Cardiac septum (tissue), 1 donor: ENCODE measurements at regions of chr2 and their contacts with region 1.

Region 1: DNA sequence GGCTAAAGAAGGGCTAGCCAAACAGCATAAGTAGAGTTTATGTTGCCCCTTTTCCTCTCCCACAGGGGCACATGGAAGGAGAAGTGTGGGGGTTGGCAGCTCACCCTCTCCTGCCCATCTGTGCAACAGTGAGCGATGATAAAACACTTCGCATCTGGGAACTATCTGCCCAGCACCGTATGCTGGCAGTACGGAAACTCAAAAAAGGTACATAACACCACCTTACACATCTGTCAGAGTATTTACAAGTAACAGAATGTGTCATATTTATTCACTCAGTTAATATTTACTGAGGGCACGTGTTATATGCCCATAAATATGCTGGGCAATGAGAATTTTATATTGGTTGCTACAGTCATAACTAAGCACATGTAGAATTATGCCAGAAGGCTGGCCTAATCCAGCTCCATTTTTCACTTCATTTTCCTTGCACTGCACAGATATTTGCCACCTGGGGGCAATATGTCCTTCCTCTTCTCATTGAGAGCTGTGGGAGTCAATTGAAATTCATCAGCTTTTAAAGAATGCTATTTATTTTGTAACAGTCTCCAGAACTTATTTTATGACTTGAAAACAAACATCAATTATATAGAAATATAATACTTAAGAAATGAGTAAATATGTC is 150.6 kb downstream of the RTN4 start:
- DNase-seq: no peak

Region 2: DNA sequence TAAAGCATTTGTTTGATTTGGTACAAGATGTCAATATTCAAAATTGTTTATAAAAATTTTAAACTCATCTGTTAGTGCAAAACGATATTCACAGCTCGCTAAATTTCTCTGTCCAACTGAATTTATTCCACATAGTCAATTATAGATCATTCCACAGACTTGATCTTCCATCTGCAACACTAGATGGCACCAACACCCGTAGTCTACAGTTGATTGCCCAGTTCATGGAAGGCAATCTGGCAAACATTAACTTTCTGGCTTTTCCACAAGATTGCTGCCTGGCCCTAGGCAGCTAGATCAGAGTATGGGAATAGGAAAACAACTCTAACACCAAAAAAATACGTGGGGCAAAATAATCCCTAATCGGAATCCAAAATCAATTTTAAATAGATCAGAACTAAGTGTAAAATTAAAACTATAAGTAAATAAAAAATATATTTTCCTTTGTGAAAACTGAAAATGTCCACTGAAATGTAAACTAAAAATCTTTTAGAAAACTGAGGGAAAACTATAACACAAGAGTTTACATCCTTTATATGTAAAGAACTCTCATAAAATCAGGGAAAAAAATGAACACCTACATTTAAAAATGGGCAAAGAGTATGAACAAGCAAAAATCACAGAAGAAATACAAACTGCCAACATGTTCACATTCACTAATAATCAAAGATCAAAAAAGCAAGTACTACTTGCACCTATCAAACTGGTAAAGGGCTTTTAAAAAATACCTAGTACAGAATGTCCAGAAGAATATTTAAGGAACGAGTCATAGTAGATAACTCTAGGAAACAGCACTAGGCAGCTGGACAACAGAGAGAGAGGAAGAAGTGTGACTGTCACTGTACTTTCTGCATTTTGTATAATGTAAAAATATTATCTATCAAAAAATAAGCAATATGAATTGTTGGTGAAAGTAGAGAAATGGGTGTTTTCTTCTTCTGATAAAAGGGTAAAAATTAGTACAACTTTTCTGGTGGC is 115.6 kb after region 1 on chr2:
- intact Hi-C with region 1: loop called (anchors 1 kb)
- DNase-seq: no peak

Region 3: DNA sequence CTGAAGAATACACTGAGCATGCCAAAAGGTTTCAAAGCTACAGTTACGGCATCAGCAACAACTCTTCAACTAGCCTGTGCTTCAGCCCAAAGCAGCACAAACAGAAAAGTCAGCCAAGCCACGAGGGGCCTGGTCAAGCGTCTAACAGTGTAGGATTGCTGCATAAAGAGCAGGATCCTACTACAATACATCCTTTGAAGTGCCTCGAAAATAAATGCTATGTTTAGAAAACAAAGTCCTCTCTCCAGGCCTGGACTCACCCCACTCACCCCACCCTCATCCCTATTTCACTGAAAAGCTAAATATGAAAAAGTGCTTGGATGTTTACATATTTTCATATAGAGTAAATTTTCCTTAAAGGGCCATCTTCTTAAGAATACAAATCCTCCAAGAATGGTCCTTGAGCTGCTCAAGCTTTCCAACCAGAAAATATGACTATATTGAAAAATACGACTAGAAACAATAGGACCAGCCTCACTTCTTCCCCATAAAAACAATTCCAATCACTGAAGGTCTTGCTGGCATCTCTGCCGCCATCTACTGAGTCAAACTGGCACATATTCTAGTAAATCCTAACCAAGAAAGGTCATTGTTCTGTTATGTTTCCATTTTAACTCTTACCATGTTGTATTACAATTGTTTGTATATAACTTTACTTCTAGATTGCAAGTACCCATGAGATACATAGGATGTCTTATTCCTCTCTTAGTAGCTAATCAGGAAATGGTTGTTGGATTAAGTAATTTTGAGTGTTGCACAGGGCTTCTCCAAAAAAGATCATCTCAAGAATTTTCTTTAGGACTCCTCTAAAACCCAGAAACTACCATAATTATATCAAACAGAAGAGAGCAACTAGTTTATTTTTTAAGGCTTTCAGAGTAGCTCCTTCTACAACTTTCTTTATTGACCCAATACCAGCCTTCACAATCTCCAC is 268.8 kb after region 1 on chr2:
- intact Hi-C with region 1: loop called (anchors 5 kb)
- DNase-seq: no peak

Region 4: GRCh38 chr2:55175254-55176025 is 275.8 kb after region 1 on chr2:
- intact Hi-C with region 1: loop called (anchors 5 kb)
- DNase-seq: no peak